PC-9 (cell line): ENCODE measurements at regions of chr11 and their contacts with region 1.

Region 1: GRCh38 chr11:120191058-120191457 is 19.8 kb upstream of the OAF start:
- DNase-seq: no peak
- H3K4me3 ChIP-seq: no peak overlapping the region
- H3K27ac ChIP-seq: no peak overlapping the region
- H3K4me1 ChIP-seq: no peaks in the 10 kb centered on the region
- H3K27me3 ChIP-seq: peaks cover 11% of the 10 kb centered on the region; the same call in 1 of the 2 replicates
- CTCF ChIP-seq: no peak

Region 2: GRCh38 chr11:118851970-118852369 is 1339.1 kb before region 1 on chr11:
- CTCF ChIA-PET with region 1: no interaction called
- POLR2A ChIA-PET with region 1: interaction called, 23 read pairs
- intact Hi-C with region 1: no loop called
- DNase-seq: no peak
- H3K4me3 ChIP-seq: no peak overlapping the region
- H3K27ac ChIP-seq: no peak overlapping the region
- H3K4me1 ChIP-seq: no peaks in the 10 kb centered on the region
- H3K27me3 ChIP-seq: no peaks in the 10 kb centered on the region
- CTCF ChIP-seq: no peak